Activated CD4-positive, alpha-beta T cell treated with anti-CD3 and anti-CD28 coated beads for 36 hours (primary cell): ENCODE measurements at regions of chr17 and their contacts with region 1.

Region 1: GRCh38 chr17:28174352-28174964 is 132.0 kb downstream of the NLK start:
- DNase-seq: peak; percentile 49
- ATAC-seq: peak; percentile 61
- H3K4me3 Mint-ChIP-seq: no peak overlapping the region
- H3K27ac Mint-ChIP-seq: no peak overlapping the region
- H3K4me1 Mint-ChIP-seq: peaks cover 20% of the 10 kb centered on the region
- H3K27me3 Mint-ChIP-seq: no peaks in the 10 kb centered on the region

Region 2: DNA sequence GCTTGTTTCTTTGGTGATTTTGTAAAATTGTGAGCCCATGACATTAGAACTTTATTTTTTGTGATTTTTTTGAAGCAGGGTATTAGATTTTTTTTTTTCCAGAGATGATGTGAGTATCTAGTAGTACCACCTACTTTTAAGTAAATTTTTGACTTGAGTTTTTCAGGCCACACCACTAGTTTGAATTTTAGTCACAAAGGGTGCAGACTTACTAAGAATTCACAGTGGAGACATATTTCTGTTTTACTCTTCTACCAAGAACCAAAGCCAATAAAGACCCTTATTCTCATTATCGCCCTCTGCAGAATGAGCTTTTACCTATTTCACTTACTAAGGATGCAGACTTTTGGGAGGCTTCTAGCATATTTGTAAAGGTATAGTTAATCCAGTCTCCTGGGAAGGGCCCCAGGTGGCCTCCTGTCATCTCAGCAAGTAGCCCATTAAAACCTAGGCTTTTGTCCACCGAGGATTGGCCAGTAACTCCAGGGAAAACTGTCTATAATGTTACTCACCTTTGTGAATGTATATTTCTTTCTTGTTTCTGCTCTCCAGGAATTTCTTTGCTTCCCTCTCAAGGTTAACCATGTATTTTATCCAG is 101.4 kb before region 1 on chr17:
- CTCF ChIA-PET with region 1: no interaction called
- POLR2A ChIA-PET with region 1: interaction called, 11 read pairs
- intact Hi-C with region 1: no loop called
- DNase-seq: no peak
- ATAC-seq: peak; percentile 55
- H3K4me3 Mint-ChIP-seq: no peak overlapping the region
- H3K27ac Mint-ChIP-seq: no peak overlapping the region
- H3K4me1 Mint-ChIP-seq: peaks cover 54% of the 10 kb centered on the region
- H3K27me3 Mint-ChIP-seq: no peaks in the 10 kb centered on the region

Region 3: DNA sequence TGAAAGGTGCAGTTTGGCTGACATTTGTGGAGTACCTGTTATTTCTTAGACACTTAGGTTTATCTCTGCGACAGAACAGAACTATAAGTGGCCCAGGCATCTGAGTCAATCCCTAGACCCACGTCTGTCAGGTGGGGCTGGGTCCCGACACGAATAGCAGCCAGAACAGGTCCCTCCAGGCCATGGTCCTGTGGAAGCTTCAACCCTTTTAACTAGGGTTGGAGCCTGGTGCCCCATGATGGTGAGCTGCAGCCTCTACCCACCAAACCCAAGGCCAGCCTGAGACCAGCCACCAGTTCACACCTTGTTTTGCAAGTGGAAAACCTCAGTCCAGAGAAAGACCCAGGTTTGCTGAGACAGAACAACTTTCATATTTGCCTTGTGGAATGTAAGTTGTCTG is 70.0 kb after region 1 on chr17:
- CTCF ChIA-PET with region 1: no interaction called
- POLR2A ChIA-PET with region 1: no interaction called
- intact Hi-C with region 1: no loop called
- DNase-seq: no peak
- ATAC-seq: no peak
- H3K4me3 Mint-ChIP-seq: no peak overlapping the region
- H3K27ac Mint-ChIP-seq: no peak overlapping the region
- H3K4me1 Mint-ChIP-seq: no peaks in the 10 kb centered on the region
- H3K27me3 Mint-ChIP-seq: peaks cover under 1% of the 10 kb centered on the region

Region 4: GRCh38 chr17:29567551-29568330 is 1393.3 kb after region 1 on chr17:
- CTCF ChIA-PET with region 1: no interaction called
- POLR2A ChIA-PET with region 1: no interaction called
- intact Hi-C with region 1: no loop called
- DNase-seq: peak; percentile 90
- ATAC-seq: peak; percentile 67
- H3K4me3 Mint-ChIP-seq: peak overlapping the region; percentile 97
- H3K27ac Mint-ChIP-seq: peak overlapping the region; percentile 96
- H3K4me1 Mint-ChIP-seq: peaks cover 25% of the 10 kb centered on the region
- H3K27me3 Mint-ChIP-seq: no peaks in the 10 kb centered on the region